ENCODE measurements at regions of chr11 and their contacts with region 1.

Region 1: GRCh38 chr11:123580557-123581275 is 73.7 kb downstream of the SCN3B start:
- DNase-seq: peak; percentile 78
- H3K4me3 Mint-ChIP-seq: no peak overlapping the region
- H3K27ac Mint-ChIP-seq: no peak overlapping the region
- H3K4me1 Mint-ChIP-seq: peaks cover 9% of the 10 kb centered on the region
- H3K27me3 Mint-ChIP-seq: peaks cover 2% of the 10 kb centered on the region

Region 2: GRCh38 chr11:122995526-122995925 is 585.2 kb before region 1 on chr11:
- CTCF ChIA-PET with region 1: no interaction called
- intact Hi-C with region 1: no loop called
- DNase-seq: no peak
- H3K4me3 Mint-ChIP-seq: no peak overlapping the region
- H3K27ac Mint-ChIP-seq: no peak overlapping the region
- H3K4me1 Mint-ChIP-seq: no peaks in the 10 kb centered on the region
- H3K27me3 Mint-ChIP-seq: peaks cover 25% of the 10 kb centered on the region

Region 3: GRCh38 chr11:123261345-123262106 is 319.2 kb before region 1 on chr11:
- CTCF ChIA-PET with region 1: interaction called, 4 read pairs
- intact Hi-C with region 1: loop called (anchors 5 kb)
- DNase-seq: peak; percentile 83
- H3K4me3 Mint-ChIP-seq: no peak overlapping the region
- H3K27ac Mint-ChIP-seq: no peak overlapping the region
- H3K4me1 Mint-ChIP-seq: peaks cover 7% of the 10 kb centered on the region
- H3K27me3 Mint-ChIP-seq: peaks cover 23% of the 10 kb centered on the region

Region 4: GRCh38 chr11:123511037-123511870 is 69.5 kb before region 1 on chr11:
- CTCF ChIA-PET with region 1: interaction called, 8 read pairs
- intact Hi-C with region 1: loop called (anchors 1 kb)
- DNase-seq: peak; percentile 82
- H3K4me3 Mint-ChIP-seq: no peak overlapping the region
- H3K27ac Mint-ChIP-seq: no peak overlapping the region
- H3K4me1 Mint-ChIP-seq: peaks cover 7% of the 10 kb centered on the region
- H3K27me3 Mint-ChIP-seq: no peaks in the 10 kb centered on the region

Region 5: DNA sequence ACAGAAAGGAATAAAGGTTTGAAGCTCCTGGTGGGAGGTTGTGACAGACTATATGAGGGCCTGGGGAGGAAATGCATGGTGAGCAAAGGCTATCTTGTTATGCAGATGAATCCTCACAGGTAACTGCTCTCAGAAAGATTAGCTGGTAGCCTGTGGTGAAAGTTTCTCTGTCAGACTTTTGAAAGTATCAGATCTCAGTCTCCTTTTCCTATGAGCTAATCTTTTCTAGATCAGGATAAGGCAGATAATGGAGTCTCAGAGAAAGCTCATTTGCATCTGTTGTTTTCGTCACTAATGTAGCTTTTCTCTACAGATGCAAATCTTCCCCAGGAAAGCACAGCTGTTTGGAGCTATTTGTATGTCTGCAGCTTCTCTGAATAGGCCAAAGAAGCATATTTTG is 194.6 kb after region 1 on chr11:
- CTCF ChIA-PET with region 1: no interaction called
- intact Hi-C with region 1: no loop called
- DNase-seq: no peak
- H3K4me3 Mint-ChIP-seq: no peak overlapping the region
- H3K27ac Mint-ChIP-seq: no peak overlapping the region
- H3K4me1 Mint-ChIP-seq: no peaks in the 10 kb centered on the region
- H3K27me3 Mint-ChIP-seq: no peaks in the 10 kb centered on the region

Measured in activated naive CD4-positive, alpha-beta T cell treated with anti-CD3 and anti-CD28 coated beads for 36 hours (primary cell).